ENCODE measurements at regions of chr3 and their contacts with region 1.

Region 1: DNA sequence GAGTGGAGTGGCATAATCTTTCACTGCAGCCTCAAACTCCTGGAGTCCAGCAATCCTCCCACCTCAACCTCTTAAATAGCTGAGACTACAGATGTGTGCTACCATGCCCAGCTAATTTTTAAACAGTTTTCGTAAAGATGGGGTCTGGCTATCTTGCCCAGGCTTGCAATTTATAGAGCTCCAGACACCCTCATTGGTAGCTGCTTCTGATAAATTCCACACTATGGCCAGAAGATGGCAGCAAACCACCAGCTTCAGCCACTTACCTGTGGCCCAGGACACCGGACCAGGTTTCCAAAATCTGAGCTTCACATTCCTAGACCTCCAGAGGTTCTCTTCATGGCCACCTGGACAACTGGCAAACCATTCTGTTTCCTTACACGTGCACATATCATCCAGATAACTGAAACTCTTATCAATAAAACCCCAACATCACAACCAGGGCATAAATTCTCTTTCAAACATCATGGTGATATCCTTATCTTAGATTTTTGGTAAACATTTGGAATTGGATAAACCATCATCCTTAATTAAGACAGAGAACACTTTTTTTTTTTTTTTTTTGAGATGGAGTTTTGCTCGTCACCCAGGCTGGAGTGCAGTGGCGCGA is 28.9 kb downstream of the FBXW12 start:
- DNase-seq: peak; percentile 77
- H3K4me3 Mint-ChIP-seq: no peak overlapping the region
- H3K27ac Mint-ChIP-seq: no peak overlapping the region
- H3K4me1 Mint-ChIP-seq: no peaks in the 10 kb centered on the region
- H3K27me3 Mint-ChIP-seq: no peaks in the 10 kb centered on the region

Region 2: DNA sequence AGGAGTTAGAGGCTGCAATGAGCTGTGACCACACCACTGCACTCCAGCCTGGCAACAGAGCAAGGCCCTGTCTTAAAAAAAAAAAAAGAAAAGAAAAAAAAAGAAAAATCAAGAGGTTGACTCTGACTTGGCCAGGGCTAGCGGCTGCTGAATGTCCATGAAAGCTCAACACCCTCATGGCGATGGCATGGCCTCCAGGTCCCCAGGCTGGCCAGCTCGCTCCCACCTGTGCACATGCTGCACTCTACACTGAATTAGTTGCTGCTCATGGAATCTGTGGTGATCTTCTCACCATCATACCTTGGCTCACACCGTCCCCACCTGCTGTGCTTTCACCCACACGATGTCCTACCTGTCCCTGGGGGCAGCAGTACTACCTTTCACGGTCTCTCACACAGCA is 201.0 kb before region 1 on chr3:
- CTCF ChIA-PET with region 1: no interaction called
- POLR2A ChIA-PET with region 1: no interaction called
- DNase-seq: no peak
- H3K4me3 Mint-ChIP-seq: no peak overlapping the region
- H3K27ac Mint-ChIP-seq: no peak overlapping the region
- H3K4me1 Mint-ChIP-seq: no peaks in the 10 kb centered on the region
- H3K27me3 Mint-ChIP-seq: no peaks in the 10 kb centered on the region

Region 3: GRCh38 chr3:48294611-48295263 is 106.2 kb before region 1 on chr3:
- CTCF ChIA-PET with region 1: no interaction called
- POLR2A ChIA-PET with region 1: no interaction called
- DNase-seq: no peak
- H3K4me3 Mint-ChIP-seq: no peak overlapping the region
- H3K27ac Mint-ChIP-seq: no peak overlapping the region
- H3K4me1 Mint-ChIP-seq: peaks cover 17% of the 10 kb centered on the region
- H3K27me3 Mint-ChIP-seq: no peaks in the 10 kb centered on the region

Region 4: GRCh38 chr3:48548729-48549705 is 148.1 kb after region 1 on chr3:
- CTCF ChIA-PET with region 1: interaction called, 19 read pairs
- POLR2A ChIA-PET with region 1: interaction called, 3 read pairs
- DNase-seq: peak; percentile 89
- H3K4me3 Mint-ChIP-seq: no peak overlapping the region
- H3K27ac Mint-ChIP-seq: peak overlapping the region; percentile 62
- H3K4me1 Mint-ChIP-seq: peaks cover 45% of the 10 kb centered on the region
- H3K27me3 Mint-ChIP-seq: no peaks in the 10 kb centered on the region